Activated CD4-positive, alpha-beta memory T cell treated with anti-CD3 and anti-CD28 coated beads, Interleukin-2, amount 10 ng/mL, durations not matched to agents 7 days and 5 days (primary cell): ENCODE measurements at regions of chr9 and their contacts with region 1.

Region 1: DNA sequence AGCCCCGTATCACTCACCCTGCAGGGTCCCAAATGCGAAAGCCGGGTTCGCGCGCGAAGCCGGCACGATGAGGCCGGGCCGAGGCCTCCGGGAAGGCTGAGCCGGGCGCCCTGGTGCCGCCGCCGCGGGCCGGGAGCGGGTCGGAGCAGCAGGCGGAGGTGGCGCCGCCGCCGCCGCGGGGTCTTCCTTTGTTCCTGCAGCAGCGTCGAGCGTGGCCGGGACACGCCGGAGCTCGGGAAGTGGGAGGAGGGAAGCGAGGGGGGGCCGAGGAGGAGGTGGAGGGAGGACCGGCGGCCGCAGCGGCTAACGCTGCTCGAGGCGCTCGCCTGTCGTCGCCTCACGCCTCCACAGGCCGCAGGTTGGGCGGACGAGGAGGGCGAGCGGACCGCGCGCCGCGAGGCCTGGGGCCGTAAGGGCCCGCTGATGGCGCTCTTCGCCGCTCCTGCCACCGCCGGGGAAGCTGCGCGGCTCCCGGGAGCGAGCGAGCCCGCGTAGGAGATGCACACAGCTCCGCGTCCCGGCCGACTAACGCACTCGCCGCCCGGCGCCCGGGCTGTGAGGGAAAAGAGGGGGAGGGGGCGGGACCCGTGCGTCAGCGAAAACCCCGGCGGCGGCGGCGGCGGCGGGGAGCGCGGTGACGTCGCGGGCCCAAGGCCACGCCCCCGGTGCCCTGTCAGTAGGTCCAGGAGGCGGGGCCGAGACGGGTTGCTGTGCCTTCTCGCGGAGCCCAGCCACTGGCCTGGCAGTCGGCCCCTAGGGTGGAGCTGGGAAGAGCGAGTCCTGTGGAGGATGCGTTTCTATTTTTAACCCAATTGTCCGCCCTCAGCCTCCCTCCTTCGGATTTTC is at the start of gene ZFAND5:
- DNase-seq: peak; percentile 92
- H3K4me3 Mint-ChIP-seq: peak within 1 kb of the TSS; percentile 87
- H3K27ac Mint-ChIP-seq: peak within 1 kb of the TSS; percentile 87
- H3K4me1 Mint-ChIP-seq: peaks cover 40% of the 10 kb centered on the region
- H3K27me3 Mint-ChIP-seq: no peaks in the 10 kb centered on the region
- total RNA-seq, gene ZFAND5: 101 to 103 TPM

Region 2: DNA sequence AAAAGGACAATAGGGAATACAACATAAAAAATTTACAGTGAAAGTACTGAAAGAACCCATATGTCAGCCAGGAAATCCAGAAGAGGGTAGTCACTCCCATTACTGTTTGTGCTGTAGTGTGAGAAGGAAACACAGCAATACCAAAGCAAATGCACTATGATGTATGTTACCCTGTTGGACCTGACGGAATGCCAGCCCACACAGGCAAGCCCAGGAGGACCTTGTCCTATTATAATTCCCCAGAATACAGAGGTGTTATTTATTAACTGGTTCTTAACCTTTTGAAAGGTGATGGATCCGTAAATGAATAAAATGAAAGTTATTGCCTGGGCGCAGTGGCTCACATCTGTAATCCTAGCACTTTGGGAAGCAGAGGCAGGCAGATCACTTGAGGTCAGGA is 136.6 kb before region 1 on chr9:
- CTCF ChIA-PET with region 1: no interaction called
- POLR2A ChIA-PET with region 1: no interaction called
- DNase-seq: no peak
- H3K4me3 Mint-ChIP-seq: no peak overlapping the region
- H3K27ac Mint-ChIP-seq: no peak overlapping the region
- H3K4me1 Mint-ChIP-seq: no peaks in the 10 kb centered on the region
- H3K27me3 Mint-ChIP-seq: peaks cover 5% of the 10 kb centered on the region

Region 3: DNA sequence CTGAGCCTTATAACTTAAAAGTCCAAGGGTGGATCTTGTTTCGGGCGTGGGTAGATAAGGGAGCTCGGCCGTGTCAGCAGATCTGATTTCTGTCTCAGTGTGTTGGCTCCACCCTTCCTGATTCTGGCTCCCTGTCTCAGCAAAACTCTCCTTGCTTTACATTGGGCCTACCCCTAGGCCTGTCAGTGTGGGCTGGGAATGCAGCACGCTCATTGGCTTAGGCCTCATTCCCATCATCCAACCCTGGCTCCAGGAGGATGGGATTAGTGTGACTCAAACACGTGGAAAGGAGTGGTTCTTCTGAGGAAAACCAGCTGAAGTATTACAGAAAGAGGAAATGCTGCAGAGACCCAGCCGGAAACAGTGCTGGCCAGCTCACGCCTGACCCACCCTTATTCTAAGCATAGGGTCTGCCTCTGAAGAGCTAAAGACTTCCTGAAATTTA is 59.8 kb before region 1 on chr9:
- CTCF ChIA-PET with region 1: no interaction called
- POLR2A ChIA-PET with region 1: interaction called, 18 read pairs
- DNase-seq: peak; percentile 55
- H3K4me3 Mint-ChIP-seq: peak overlapping the region; percentile 54
- H3K27ac Mint-ChIP-seq: peak overlapping the region; percentile 84
- H3K4me1 Mint-ChIP-seq: peaks cover 47% of the 10 kb centered on the region
- H3K27me3 Mint-ChIP-seq: peaks cover 3% of the 10 kb centered on the region

Region 4: DNA sequence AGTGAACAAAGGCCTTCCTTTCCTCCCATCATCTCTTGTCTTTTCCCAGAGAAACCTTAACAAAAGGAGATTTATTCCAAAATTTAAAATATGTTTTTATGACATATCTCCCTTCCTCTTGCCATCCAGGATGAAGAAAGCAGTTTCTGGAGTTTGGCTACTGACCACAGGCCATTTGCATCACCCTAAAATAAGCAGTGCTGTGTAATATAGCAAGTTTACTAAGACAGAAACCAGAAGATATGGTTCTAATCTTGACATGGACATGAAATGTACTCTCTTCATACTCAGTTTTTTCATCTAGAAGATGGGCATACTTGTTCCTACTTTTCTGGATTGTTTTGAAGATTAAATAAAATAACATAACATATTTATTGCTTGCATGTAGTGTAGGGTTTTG is 50.3 kb after region 1 on chr9:
- CTCF ChIA-PET with region 1: no interaction called
- POLR2A ChIA-PET with region 1: no interaction called
- DNase-seq: no peak
- H3K4me3 Mint-ChIP-seq: no peak overlapping the region
- H3K27ac Mint-ChIP-seq: no peak overlapping the region
- H3K4me1 Mint-ChIP-seq: no peaks in the 10 kb centered on the region
- H3K27me3 Mint-ChIP-seq: no peaks in the 10 kb centered on the region

Region 5: GRCh38 chr9:72443855-72444254 is 79.0 kb after region 1 on chr9:
- CTCF ChIA-PET with region 1: interaction called, 5 read pairs
- POLR2A ChIA-PET with region 1: interaction called, 29 read pairs
- DNase-seq: peak; percentile 40
- H3K4me3 Mint-ChIP-seq: peak overlapping the region; percentile 8
- H3K27ac Mint-ChIP-seq: peak overlapping the region; percentile 91
- H3K4me1 Mint-ChIP-seq: peaks cover 48% of the 10 kb centered on the region
- H3K27me3 Mint-ChIP-seq: no peaks in the 10 kb centered on the region

Region 6: GRCh38 chr9:72526901-72527800 is 162.2 kb after region 1 on chr9:
- CTCF ChIA-PET with region 1: no interaction called
- POLR2A ChIA-PET with region 1: interaction called, 10 read pairs
- DNase-seq: peak; percentile 78
- H3K4me3 Mint-ChIP-seq: peak overlapping the region; percentile 68
- H3K27ac Mint-ChIP-seq: peak overlapping the region; percentile 91
- H3K4me1 Mint-ChIP-seq: peaks cover 47% of the 10 kb centered on the region
- H3K27me3 Mint-ChIP-seq: no peaks in the 10 kb centered on the region

Region 7: GRCh38 chr9:72592502-72593403 is 227.9 kb after region 1 on chr9:
- CTCF ChIA-PET with region 1: interaction called, 12 read pairs
- POLR2A ChIA-PET with region 1: interaction called, 15 read pairs
- DNase-seq: peak; percentile 42
- H3K4me3 Mint-ChIP-seq: no peak overlapping the region
- H3K27ac Mint-ChIP-seq: no peak overlapping the region
- H3K4me1 Mint-ChIP-seq: peaks cover 65% of the 10 kb centered on the region
- H3K27me3 Mint-ChIP-seq: peaks cover 8% of the 10 kb centered on the region